K562 (cell line): ENCODE measurements at regions of chr2 and their contacts with region 1.

Region 1: GRCh38 chr2:105510761-105511610 is 112.1 kb upstream of the FHL2 start:
- DNase-seq: peak in 2 of 4 experiments; percentile 50 to 66
- ATAC-seq: peak; percentile 91
- H3K4me3 ChIP-seq: no peak overlapping the region
- H3K27ac ChIP-seq: peak overlapping the region; percentile 56
- H3K4me1 ChIP-seq: peaks cover 0 to 17% of the 10 kb centered on the region in 2 experiments; a peak in 2 of 5 replicates
- H3K27me3 ChIP-seq: no peaks in the 10 kb centered on the region
- CTCF ChIP-seq: no peak
- EP300 ChIP-seq: peak; percentile 30; the same call in 1 of the 2 replicates
- POLR2A ChIP-seq: no peak
- RAD21 ChIP-seq: no peak

Region 2: DNA sequence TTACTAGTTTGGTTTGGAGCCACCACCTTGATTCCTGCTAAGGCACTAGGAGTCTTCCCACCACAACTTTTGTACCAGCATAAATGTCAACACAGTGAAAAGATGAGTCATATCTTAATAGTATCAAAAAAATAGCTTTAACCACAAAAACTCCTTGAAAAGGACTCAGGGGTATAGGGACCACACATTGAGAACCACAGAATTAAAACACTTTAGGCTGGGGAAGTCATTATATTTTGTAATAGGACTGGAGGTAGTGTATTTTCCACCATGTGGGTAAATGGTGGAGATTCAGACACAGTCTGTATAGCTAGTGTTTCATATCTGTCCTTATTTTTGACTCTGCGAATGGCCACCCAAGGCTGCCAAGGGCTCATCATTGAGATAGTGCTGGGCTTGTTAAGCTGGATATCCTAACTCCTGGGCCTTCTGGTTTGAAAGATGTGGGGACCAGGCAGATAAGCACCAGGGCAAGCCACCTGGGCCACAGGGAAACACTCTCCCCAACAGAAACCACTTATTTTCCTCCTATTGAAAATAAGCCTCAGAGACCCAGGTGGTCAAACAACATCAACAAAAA is 93.0 kb before region 1 on chr2:
- CTCF ChIA-PET with region 1: no interaction called
- POLR2A ChIA-PET with region 1: no interaction called
- in situ Hi-C with region 1: no loop called
- intact Hi-C with region 1: no loop called
- DNase-seq: peak; percentile 64 to 83 (median 76)
- ATAC-seq: peak; percentile 84
- H3K4me3 ChIP-seq: no peak overlapping the region
- H3K27ac ChIP-seq: peak overlapping the region; percentile 11
- H3K4me1 ChIP-seq: peaks cover 0 to 11% of the 10 kb centered on the region in 2 experiments; a peak in 2 of 5 replicates
- H3K27me3 ChIP-seq: peaks cover 0 to under 1% of the 10 kb centered on the region in 2 experiments; a peak in 1 of 5 replicates
- CTCF ChIP-seq: no peak
- EP300 ChIP-seq: peak; percentile 75; the same call in 1 of the 2 replicates
- POLR2A ChIP-seq: no peak
- RAD21 ChIP-seq: no peak

Region 3: GRCh38 chr2:105454801-105455485 is 56.0 kb before region 1 on chr2:
- CTCF ChIA-PET with region 1: no interaction called
- POLR2A ChIA-PET with region 1: no interaction called
- in situ Hi-C with region 1: no loop called
- intact Hi-C with region 1: loop called (anchors 2 kb)
- DNase-seq: peak; percentile 37 to 74 (median 51)
- ATAC-seq: peak; percentile 94
- H3K4me3 ChIP-seq: no peak overlapping the region
- H3K27ac ChIP-seq: no peak overlapping the region
- H3K4me1 ChIP-seq: peaks cover 0 to 17% of the 10 kb centered on the region in 2 experiments; a peak in 2 of 5 replicates
- H3K27me3 ChIP-seq: no peaks in the 10 kb centered on the region
- CTCF ChIP-seq: peak; percentile 69 to 81 (median 78)
- EP300 ChIP-seq: peak; percentile 22; the same call in 1 of the 2 replicates
- POLR2A ChIP-seq: no peak
- RAD21 ChIP-seq: peak; percentile 80 to 81

Region 4: DNA sequence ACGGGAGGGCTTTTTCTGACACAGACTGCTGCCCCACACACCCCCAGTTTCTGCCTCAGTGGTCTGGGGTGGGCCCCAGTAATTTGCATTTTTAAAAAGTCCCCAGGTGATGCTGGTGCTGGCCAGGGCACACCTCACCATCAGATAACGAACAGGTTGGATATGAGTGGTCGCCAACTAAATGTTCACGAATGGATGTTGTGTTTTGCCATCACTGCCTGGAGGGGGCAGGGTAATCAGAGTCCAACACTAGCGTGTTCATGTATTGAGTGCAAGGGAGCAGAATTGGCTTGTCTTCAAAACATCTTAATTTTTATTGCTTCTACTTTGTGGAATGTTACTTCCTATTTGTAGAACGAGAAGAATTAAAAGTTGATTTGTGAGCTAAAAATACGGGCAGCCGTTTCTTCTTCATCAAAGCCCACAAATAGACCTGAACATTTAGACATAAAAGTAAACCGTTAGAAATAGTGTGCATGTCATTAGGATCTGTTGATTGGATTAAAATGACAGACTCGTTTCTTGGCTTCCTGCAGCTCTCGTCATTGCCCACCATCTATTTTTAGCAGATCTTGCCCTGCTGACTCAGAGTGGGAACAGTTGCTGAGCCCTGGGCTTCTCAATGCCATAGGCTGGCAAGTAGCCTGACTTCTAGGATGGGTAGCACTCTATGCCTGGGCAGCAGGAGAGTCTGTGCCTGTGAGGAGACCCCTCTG is 278.9 kb after region 1 on chr2:
- CTCF ChIA-PET with region 1: no interaction called
- POLR2A ChIA-PET with region 1: no interaction called
- in situ Hi-C with region 1: no loop called
- intact Hi-C with region 1: no loop called
- DNase-seq: no peak
- ATAC-seq: no peak
- H3K4me3 ChIP-seq: no peak overlapping the region
- H3K27ac ChIP-seq: no peak overlapping the region
- H3K4me1 ChIP-seq: peaks cover 20 to 31% of the 10 kb centered on the region in 2 experiments
- H3K27me3 ChIP-seq: no peaks in the 10 kb centered on the region
- CTCF ChIP-seq: peak; percentile 1 to 39 (median 23); a peak in 3 of 6 replicates
- EP300 ChIP-seq: no peak
- POLR2A ChIP-seq: no peak
- RAD21 ChIP-seq: peak in 1 of 2 experiments; percentile 22; a peak in 2 of 4 replicates

Region 5: DNA sequence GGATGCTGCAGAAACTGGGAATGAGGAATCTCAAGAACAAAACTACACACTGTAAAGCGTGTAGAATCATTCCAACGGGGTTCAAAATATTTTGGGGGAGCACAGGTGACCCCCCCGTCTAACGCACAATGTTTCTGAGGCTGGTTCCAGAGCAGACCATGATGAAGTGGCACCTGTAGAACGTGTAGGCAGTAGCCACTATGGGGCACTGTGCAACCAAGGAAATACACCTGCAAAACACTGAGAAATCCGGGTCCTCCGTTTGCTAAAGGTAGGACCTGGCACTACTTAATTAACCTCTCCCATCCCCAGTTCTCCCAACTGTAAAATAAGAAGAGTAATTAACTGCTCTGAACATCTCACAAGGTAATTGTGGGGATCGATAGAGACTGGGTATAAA is 1352.4 kb after region 1 on chr2:
- CTCF ChIA-PET with region 1: no interaction called
- POLR2A ChIA-PET with region 1: no interaction called
- in situ Hi-C with region 1: no loop called
- intact Hi-C with region 1: no loop called
- DNase-seq: no peak
- ATAC-seq: no peak; the same call in 2 of the 3 replicates
- H3K4me3 ChIP-seq: no peak overlapping the region
- H3K27ac ChIP-seq: no peak overlapping the region
- H3K4me1 ChIP-seq: no peaks in the 10 kb centered on the region
- H3K27me3 ChIP-seq: no peaks in the 10 kb centered on the region
- CTCF ChIP-seq: peak in 1 of 3 experiments; percentile 14; a peak in 2 of 6 replicates
- EP300 ChIP-seq: no peak
- POLR2A ChIP-seq: no peak
- RAD21 ChIP-seq: no peak